Naive thymus-derived CD4-positive, alpha-beta T cell (primary cell): ENCODE measurements at regions of chr20 and their contacts with region 1.

Region 1: GRCh38 chr20:48783533-48784272 is 44.1 kb downstream of the PREX1 start:
- DNase-seq: peak in 1 of 9 donors; percentile 47
- ATAC-seq: peak; percentile 55
- H3K4me3 ChIP-seq: no peak overlapping the region
- H3K4me3 Mint-ChIP-seq: no peak overlapping the region
- H3K27ac ChIP-seq: no peak overlapping the region
- H3K27ac Mint-ChIP-seq: no peak overlapping the region
- H3K4me1 ChIP-seq: peaks cover 19 to 59% of the 10 kb centered on the region in 2 donors
- H3K4me1 Mint-ChIP-seq: peaks cover 16 to 54% (median 25%) of the 10 kb centered on the region in 7 donors
- H3K27me3 ChIP-seq: no peaks in the 10 kb centered on the region
- H3K27me3 Mint-ChIP-seq: no peaks in the 10 kb centered on the region

Region 2: DNA sequence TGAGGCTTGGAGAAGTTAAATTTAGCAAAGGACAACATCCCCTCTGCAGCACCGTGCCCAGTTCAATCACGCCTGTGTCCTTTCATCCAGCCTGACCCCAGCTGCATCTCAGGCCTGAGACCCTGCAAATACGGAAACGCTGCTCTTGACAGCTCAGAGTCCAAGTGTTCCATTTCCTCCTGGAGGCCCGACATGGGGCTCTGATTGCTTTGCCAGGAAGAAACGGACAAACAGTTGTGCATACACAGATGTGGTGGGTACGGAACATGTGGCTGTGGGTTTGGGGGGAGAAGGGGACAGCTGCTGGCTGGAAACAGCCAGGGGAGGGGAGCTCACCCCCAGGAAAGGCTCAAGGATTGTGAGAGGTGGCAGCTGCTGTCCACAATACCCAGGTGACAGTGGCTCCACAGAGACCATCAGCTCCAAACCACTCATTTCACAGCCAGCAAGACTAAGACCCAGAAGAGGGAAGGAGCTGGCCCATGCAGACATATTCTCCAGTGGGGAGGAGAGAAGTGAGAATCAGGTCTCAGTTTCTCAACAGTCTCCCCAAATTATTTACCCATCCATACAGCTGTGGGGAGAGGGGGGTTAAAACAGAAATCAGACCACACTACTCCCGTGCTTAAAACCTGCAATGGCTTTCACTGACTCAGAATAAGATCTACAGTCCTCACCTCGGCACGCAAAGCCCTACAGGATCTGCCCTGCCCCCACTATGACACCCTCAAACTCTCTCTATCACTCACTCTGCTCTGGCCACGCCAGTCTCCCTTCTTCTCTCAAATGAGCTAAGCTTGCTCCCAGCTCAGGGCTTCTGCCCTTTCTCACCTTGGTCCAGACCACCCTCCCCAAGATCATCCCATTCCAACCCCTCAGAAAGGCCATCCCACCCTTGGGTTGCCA is 45.1 kb before region 1 on chr20:
- CTCF ChIA-PET with region 1: no interaction called
- POLR2A ChIA-PET with region 1: no interaction called
- intact Hi-C with region 1: loop called in 1 of 2 experiments (anchors 5 kb)
- DNase-seq: peak in 1 of 9 donors; percentile 65
- ATAC-seq: peak; percentile 54
- H3K4me3 ChIP-seq: no peak overlapping the region
- H3K4me3 Mint-ChIP-seq: peak overlapping the region in 2 of 10 donors; percentile 37 to 76
- H3K27ac ChIP-seq: no peak overlapping the region
- H3K27ac Mint-ChIP-seq: peak overlapping the region in 5 of 9 donors; percentile 11 to 90 (median 53)
- H3K4me1 ChIP-seq: peaks cover 0 to 47% of the 10 kb centered on the region in 2 donors
- H3K4me1 Mint-ChIP-seq: peaks cover 7 to 65% (median 24%) of the 10 kb centered on the region in 7 donors
- H3K27me3 ChIP-seq: no peaks in the 10 kb centered on the region
- H3K27me3 Mint-ChIP-seq: no peaks in the 10 kb centered on the region

Region 3: DNA sequence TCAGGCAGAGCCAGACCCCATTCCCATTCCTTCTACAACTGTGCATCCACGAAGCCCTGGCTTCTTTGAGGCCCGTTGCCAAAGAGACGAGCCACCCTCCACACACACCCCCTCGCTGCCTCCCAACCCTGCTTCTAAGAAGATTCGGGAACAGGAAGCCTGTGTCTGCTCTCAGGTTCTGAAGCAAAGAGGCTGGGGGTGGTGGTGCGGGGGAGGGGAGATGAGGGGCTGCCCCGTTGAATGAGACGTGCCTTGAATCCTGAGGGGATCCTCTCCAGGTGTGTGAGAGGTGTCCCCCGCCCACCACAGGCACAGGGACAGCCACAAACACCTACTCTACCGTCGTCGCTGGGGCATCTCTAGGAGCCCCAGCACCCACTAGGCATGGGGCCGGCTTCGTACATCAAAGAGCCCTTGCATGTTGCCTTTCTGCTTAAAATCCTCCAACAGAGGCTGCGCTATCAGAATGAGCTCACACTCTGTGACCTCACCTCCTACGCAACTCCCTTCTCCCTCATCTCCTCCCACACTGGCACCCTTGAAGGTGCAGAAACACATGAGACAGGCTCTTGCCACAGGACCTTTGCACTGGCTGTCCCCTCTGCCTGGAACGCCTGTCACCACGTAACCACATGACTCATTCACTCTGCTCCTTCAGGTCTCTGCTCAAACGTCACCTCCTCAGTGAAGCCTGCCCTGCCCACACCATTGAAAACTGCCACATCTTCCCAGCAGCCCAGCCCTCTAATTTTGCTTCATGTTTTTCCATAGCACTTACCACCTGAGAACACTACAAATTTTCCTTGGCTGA is 14.4 kb before region 1 on chr20:
- CTCF ChIA-PET with region 1: no interaction called
- POLR2A ChIA-PET with region 1: interaction called, 3 read pairs
- intact Hi-C with region 1: loop called in 1 of 2 experiments (anchors 2 kb)
- DNase-seq: peak; percentile 26 to 90 (median 59)
- ATAC-seq: peak; percentile 88
- H3K4me3 ChIP-seq: peak overlapping the region; percentile 3
- H3K4me3 Mint-ChIP-seq: peak overlapping the region; percentile 37 to 78 (median 70)
- H3K27ac ChIP-seq: peak overlapping the region; percentile 60
- H3K27ac Mint-ChIP-seq: peak overlapping the region; percentile 43 to 95 (median 89)
- H3K4me1 ChIP-seq: peaks cover 25 to 67% of the 10 kb centered on the region in 2 donors
- H3K4me1 Mint-ChIP-seq: peaks cover 32 to 85% (median 52%) of the 10 kb centered on the region in 7 donors
- H3K27me3 ChIP-seq: no peaks in the 10 kb centered on the region
- H3K27me3 Mint-ChIP-seq: no peaks in the 10 kb centered on the region

Region 4: DNA sequence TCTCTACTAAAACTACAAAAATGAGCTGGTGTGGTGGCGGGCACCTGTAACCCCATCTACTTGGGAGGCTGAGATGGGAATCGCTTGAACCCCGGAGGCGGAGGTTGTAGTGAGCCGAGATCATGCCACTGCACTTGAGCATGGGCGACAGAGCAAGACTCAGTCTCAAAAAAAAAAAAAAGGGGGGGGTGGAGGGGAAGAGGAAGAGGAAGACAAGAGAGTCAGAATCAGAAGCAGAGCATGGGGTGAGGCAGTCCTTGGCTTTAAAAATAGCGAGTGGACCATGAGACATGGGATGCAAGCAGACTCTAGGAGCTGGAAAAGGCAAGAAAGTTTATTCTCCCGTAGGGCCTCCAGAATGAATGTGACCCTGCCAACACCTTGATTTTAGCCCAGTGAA is 1025.0 kb after region 1 on chr20:
- CTCF ChIA-PET with region 1: no interaction called
- POLR2A ChIA-PET with region 1: no interaction called
- intact Hi-C with region 1: no loop called
- DNase-seq: no peak
- ATAC-seq: no peak
- H3K4me3 ChIP-seq: no peak overlapping the region
- H3K4me3 Mint-ChIP-seq: no peak overlapping the region
- H3K27ac ChIP-seq: no peak overlapping the region
- H3K27ac Mint-ChIP-seq: no peak overlapping the region
- H3K4me1 ChIP-seq: peaks cover 6 to 12% of the 10 kb centered on the region in 2 donors
- H3K4me1 Mint-ChIP-seq: peaks cover 11 to 46% (median 20%) of the 10 kb centered on the region in 7 donors
- H3K27me3 ChIP-seq: no peaks in the 10 kb centered on the region
- H3K27me3 Mint-ChIP-seq: no peaks in the 10 kb centered on the region